H1 (cell line): ENCODE measurements at regions of chr5 and their contacts with region 1.

Region 1: DNA sequence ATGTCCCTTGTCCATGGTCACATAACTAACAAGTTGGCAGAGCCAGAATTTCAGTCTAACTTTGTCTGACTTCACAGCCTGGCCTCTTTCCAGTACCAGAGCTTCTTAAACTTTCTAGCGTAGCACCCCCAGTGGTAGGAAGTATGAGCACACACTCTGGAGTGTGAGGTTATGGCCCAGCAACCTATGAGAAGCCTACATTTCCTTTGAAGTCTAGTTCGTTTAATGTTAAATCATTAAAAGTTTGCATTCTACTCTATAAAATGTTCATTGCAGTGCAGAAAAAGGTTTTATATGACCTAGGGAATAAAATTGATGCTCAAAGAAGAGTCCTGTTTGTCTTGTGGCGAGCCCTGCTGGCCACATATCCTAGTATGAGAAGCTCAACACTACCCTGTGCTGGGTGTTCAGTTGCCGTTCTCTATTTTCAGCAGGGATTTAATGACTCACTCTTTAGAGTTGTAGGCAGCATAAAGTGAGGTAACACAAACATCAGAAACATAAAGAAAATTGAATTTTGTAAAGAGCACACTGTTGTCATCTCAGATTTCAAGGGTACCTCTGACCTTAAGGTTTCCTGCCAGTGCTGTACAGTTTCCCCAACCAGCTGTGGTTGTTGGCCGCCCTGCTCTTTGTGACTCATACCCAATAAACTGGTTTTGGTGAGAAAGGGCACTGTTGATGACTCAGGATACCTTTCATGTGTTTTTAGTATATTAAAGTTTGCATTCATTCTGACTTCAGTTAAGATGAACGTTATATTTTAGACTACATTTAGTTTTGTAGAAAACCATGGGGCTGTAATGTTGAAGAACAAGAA is 14.3 kb downstream of the MCCC2 start:
- DNase-seq: peak in 1 of 2 experiments; percentile 50
- H3K4me3 ChIP-seq: no peak overlapping the region
- H3K27ac ChIP-seq: no peak overlapping the region
- H3K4me1 ChIP-seq: no peaks in the 10 kb centered on the region
- H3K27me3 ChIP-seq: no peaks in the 10 kb centered on the region
- CTCF ChIP-seq: peak; percentile 19 to 81 (median 51); a peak in 3 of 4 replicates
- EP300 ChIP-seq: no peak
- POLR2A ChIP-seq: no peak
- RAD21 ChIP-seq: peak; percentile 51 to 63

Region 2: DNA sequence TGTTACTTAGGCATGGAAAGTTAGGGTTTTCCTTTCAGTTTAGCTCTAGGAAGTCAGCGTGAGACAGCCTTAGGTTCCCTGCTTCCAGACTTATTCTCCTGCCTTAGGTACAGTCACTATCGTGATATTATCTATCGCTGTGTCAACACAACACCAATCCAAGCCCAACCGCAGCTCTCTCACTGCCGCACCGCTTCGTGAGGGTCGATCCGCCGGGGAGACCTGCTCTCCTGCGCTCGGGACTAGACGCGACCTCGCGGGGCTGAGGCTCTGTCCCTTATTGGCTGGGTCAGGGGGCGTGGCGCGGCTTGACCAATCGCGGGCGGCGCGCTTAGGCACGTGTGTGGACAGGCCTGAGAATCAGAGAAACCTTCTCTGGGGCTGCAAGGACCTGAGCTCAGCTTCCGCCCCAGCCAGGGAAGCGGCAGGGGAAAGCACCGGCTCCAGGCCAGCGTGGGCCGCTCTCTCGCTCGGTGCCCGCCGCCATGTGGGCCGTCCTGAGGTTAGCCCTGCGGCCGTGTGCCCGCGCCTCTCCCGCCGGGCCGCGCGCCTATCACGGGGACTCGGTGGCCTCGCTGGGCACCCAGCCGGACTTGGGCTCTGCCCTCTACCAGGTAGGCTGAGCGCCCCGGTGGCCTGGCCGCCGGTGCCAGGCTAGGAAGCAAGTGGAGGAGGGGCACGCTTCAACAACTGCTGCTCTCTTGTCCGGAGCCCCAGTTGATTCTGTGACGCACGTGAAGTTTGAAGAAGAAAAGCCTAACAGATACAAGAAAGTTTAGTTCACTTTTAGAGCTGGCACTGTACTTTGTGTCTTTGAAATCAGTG is 14.3 kb before region 1 on chr5 and contains the start of gene MCCC2:
- CTCF ChIA-PET with region 1: interaction called, 15 read pairs
- POLR2A ChIA-PET with region 1: interaction called, 10 read pairs
- DNase-seq: peak; percentile 93 to 98
- H3K4me3 ChIP-seq: peak within 1 kb of the TSS; percentile 56 to 83 (median 81)
- H3K27ac ChIP-seq: peak within 1 kb of the TSS; percentile 91
- H3K4me1 ChIP-seq: peaks cover 0 to 9% (median 0%) of the 10 kb centered on the region in 4 experiments; a peak in 3 of 7 replicates
- H3K27me3 ChIP-seq: no peaks in the 10 kb centered on the region
- CTCF ChIP-seq: no peak
- EP300 ChIP-seq: 0 out of 3 replicates have a peak, but pooled peaks of 1 of the 2 experiments have one; percentile 19
- POLR2A ChIP-seq: peak; percentile 93 to 97
- RAD21 ChIP-seq: no peak
- total RNA-seq, gene MCCC2: 71.4 and 71.7 TPM in 2 replicates

Region 3: GRCh38 chr5:71615809-71616208 is 14.4 kb after region 1 on chr5:
- CTCF ChIA-PET with region 1: interaction called, 12 read pairs
- POLR2A ChIA-PET with region 1: no interaction called
- DNase-seq: no peak
- H3K4me3 ChIP-seq: no peak overlapping the region
- H3K27ac ChIP-seq: no peak overlapping the region
- H3K4me1 ChIP-seq: no peaks in the 10 kb centered on the region
- H3K27me3 ChIP-seq: no peaks in the 10 kb centered on the region
- CTCF ChIP-seq: no peak
- EP300 ChIP-seq: no peak
- POLR2A ChIP-seq: no peak
- RAD21 ChIP-seq: no peak

Region 4: DNA sequence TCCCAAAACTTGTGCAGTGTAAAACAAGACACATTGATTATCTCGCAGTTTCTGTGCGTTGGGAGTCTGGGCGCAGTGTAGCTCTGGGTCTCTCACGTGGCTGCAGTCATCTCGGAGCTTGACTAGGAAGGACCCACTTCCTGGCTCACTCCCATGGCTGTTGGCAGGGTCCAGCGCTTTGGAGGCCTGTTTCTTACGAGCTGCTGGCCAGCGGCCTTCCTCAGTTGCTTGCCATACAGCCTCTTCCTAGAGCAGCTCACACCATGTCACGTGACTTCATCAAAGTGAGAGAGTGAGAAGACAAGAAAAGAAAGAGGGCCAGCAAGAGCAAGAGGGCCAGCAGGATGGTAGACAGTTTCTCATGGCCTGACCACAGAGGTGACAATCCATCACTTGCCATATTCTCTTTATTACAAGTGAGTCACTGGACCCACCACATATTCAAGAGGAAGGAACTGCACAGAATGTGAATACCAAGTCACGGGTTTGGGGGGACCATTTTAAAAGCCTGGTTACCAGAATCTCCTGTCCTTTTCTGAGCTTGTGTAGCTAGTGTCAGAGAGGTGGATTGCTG is 21.9 kb after region 1 on chr5:
- CTCF ChIA-PET with region 1: interaction called, 10 read pairs
- POLR2A ChIA-PET with region 1: no interaction called
- DNase-seq: no peak
- H3K4me3 ChIP-seq: no peak overlapping the region
- H3K27ac ChIP-seq: no peak overlapping the region
- H3K4me1 ChIP-seq: no peaks in the 10 kb centered on the region
- H3K27me3 ChIP-seq: no peaks in the 10 kb centered on the region
- CTCF ChIP-seq: no peak
- EP300 ChIP-seq: no peak
- POLR2A ChIP-seq: no peak
- RAD21 ChIP-seq: no peak

Region 5: DNA sequence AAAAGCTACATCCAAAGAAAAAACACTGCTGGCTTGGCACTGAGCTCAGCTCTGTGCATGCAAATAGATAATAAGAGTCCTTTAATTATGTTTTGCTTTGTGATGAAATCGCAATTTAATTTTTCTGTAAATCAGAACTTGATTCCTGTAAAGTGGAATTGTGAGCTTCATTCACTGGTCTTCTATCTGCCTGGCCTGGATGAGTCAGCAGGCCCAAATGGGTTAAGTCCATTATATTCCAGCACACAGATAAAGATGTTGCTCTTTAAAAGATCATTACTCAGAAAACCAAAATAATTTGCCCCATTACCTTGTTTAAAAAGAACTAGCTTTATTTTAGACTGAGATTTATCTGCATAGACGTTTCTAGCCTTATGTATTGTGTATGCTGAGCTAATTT is 208.0 kb after region 1 on chr5:
- CTCF ChIA-PET with region 1: no interaction called
- POLR2A ChIA-PET with region 1: no interaction called
- DNase-seq: no peak
- H3K4me3 ChIP-seq: no peak overlapping the region
- H3K27ac ChIP-seq: no peak overlapping the region
- H3K4me1 ChIP-seq: peaks cover 0 to 15% (median 9%) of the 10 kb centered on the region in 4 experiments; a peak in 5 of 7 replicates
- H3K27me3 ChIP-seq: no peaks in the 10 kb centered on the region
- CTCF ChIP-seq: no peak
- EP300 ChIP-seq: no peak
- POLR2A ChIP-seq: no peak
- RAD21 ChIP-seq: no peak